ENCODE measurements at regions of chr6 and their contacts with region 1.

Region 1: DNA sequence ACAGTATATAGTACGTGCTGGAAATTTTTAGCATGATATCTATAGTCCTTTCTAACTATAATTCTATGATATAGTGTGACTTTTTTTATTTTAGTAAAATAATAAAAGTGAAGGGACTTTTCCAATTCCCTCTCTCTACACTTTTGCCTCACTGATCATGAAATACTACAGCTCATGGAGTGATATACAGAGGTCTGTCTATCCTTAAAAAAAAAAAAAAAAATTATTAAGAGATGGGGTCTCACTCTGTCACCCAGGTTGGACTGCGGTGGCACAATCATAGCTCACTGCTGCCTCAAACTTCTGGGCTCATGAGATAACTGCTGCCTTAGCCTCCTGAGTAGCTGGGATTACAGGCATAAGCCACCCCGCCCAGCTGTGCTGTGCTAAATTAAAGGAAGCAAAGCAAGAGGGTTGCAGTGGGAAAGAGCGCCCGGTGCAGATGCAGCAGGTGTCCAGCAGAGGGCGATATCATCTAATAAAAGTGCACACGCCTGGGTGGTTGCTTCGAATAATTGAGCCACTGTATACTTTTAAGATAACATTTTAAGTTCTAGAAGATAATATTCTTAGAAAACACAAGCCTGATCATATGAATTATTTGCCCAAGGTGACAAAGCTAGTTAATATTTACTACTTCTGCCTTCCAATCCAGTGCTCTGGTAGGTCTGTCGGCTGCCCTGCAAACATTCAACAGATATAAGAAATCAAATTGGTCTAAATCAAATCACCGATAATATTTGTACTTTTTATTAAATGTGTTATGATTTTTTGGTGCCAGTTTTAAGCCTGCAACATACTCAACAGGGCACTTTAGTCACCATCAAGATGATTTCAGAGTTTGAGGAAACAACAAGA is 94.9 kb upstream of the NT5E start:
- DNase-seq: peak; percentile 77 to 83
- H3K4me3 ChIP-seq: no peak overlapping the region
- H3K27ac ChIP-seq: no peak overlapping the region
- H3K4me1 ChIP-seq: no peaks in the 10 kb centered on the region
- H3K27me3 ChIP-seq: no peaks in the 10 kb centered on the region
- CTCF ChIP-seq: peak; percentile 93

Region 2: DNA sequence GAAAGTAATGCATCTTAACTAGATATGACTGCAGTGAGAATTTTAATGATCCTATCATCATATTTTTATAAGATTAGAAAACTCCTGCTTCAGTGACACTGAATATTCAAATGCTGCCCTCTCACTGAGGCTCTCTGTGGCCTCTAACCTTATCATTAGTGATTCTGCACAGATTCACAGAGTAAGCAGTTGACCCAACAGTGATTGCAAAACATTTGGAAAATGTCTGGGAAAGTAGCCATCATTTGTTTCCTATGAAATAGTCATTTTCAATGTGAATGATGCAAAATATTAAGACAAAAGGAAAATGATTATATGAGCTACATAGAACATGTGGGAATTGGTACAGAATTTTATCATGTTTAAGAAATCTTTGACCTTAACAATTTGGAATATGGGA is 800.9 kb before region 1 on chr6:
- intact Hi-C with region 1: no loop called
- DNase-seq: no peak
- H3K4me3 ChIP-seq: no peak overlapping the region
- H3K27ac ChIP-seq: no peak overlapping the region
- H3K4me1 ChIP-seq: peaks cover 0 to 40% (median 5%) of the 10 kb centered on the region in 4 donors
- H3K27me3 ChIP-seq: no peaks in the 10 kb centered on the region
- CTCF ChIP-seq: no peak

Region 3: DNA sequence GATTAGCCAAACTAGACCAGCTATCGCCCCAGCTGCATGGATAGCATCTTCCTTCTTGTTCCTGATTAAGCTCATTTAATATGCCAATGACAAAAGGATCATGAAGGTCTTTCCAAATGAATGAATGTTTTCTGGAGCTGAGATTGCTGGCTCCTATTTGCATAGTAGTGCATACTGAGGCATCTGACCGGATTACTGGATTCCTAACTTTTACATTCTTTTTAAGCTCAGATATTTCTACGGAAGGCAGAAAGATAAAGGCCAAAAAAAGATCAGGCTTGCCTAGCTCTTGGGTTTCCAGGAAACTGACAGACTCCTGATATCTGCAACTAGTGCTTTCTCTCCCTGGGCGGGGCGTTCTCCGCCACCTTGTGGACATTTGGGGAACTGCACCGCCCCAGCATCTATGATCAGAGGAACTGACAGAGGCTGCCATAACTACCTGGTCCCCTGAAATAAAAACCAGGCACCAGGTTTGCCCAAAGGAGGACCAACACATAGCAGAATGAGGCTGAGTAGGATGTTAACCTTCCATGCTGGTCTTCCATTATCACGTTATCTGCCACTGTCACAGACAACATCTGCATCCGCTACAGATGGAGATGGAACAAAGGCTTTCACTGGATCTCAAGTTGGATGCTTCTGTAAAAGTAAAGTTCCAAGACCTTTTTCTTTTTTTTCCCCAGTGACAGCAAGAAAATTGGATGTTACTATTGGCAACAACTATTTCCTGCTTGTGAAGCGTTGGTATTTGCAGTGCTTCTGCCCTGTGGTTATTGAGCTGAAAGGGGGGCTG is 128.1 kb after region 1 on chr6:
- intact Hi-C with region 1: loop called (anchors 5 kb)
- DNase-seq: peak; percentile 80 to 85
- H3K4me3 ChIP-seq: no peak overlapping the region
- H3K27ac ChIP-seq: peak overlapping the region in 1 of 2 donors; percentile 52
- H3K4me1 ChIP-seq: peaks cover 0 to 11% (median 7%) of the 10 kb centered on the region in 4 donors
- H3K27me3 ChIP-seq: no peaks in the 10 kb centered on the region
- CTCF ChIP-seq: peak; percentile 98 to 100

Region 4: DNA sequence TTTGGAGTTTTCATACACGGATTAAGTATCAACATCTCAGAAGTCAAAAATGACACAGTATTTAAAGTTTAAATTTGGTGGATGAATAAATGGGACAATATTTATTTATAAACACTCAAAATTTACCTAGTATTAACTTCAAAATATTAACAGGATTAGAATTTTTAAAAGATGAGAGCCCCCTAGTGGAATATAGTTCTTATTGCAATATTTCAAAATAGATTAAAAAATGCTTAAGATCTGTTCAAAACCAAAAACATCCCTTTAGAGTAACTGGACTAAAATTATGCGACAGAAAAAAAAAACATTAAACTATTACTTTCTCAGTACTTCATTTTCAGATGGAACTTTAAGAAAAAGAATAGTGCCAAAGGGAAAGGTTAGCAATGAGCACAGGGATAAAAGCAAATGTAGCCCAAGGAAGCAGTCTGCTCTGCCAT is 182.1 kb after region 1 on chr6:
- intact Hi-C with region 1: loop called (anchors 5 kb)
- DNase-seq: no peak
- H3K4me3 ChIP-seq: no peak overlapping the region
- H3K27ac ChIP-seq: peak overlapping the region in 1 of 2 donors; percentile 5
- H3K4me1 ChIP-seq: peaks cover 0 to 8% (median 0%) of the 10 kb centered on the region in 4 donors
- H3K27me3 ChIP-seq: no peaks in the 10 kb centered on the region
- CTCF ChIP-seq: peak; percentile 24 to 60

Measured in tibial artery (tissue), 4 donors.